ENCODE measurements at regions of chr11 and their contacts with region 1.

Region 1: DNA sequence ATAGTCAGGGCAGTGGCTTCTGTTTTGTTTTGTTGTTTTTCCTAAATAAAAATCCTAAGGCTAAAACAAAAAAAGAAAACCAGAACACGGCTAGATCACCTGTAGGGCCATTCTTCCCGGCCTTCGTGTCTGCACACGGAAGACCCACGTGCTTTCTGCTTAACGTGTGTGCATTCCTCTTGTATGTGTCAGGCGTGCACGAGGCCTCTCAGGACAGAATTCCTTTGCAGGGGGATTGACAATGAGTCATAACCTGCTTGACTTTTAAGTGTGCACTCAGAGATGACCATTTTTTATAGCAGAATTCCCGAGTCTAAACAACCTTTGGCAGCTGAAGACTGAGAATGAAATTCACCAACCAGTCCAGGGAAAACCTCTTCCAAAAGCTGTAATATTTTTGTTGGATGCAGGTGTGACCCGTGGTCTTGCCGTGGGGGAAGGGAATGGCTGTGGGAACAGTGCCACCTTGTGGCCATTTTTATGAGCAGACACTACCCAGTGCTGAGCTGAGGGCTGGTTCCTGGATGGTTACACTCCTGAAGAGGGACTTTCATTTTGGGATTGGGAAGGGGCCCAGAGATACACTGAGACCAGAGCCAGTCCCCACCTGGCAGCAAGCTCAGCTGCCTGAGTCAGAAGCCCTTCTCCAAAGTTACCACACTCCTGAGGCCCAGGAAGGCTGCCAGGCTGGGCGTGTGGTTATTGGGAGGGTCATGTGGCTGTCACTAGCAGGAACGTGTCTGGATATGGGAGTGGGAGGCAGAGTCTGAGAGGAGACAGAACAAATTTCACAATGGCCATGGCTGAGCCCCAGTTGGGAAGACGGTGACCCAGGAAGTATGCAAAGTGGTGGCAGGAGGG is 35.8 kb upstream of the DKK3 start:
- DNase-seq: peak; percentile 97
- H3K4me3 ChIP-seq: peak overlapping the region in 3 of 4 donors; percentile 8 to 19 (median 10)
- H3K27ac ChIP-seq: peak overlapping the region; percentile 77 to 82 (median 80)
- H3K4me1 ChIP-seq: peaks cover 12 to 42% (median 30%) of the 10 kb centered on the region in 4 donors
- H3K27me3 ChIP-seq: no peaks in the 10 kb centered on the region
- CTCF ChIP-seq: peak; percentile 90 to 95 (median 94)
- EP300 ChIP-seq: peak; percentile 85
- POLR2A ChIP-seq: no peak

Region 2: DNA sequence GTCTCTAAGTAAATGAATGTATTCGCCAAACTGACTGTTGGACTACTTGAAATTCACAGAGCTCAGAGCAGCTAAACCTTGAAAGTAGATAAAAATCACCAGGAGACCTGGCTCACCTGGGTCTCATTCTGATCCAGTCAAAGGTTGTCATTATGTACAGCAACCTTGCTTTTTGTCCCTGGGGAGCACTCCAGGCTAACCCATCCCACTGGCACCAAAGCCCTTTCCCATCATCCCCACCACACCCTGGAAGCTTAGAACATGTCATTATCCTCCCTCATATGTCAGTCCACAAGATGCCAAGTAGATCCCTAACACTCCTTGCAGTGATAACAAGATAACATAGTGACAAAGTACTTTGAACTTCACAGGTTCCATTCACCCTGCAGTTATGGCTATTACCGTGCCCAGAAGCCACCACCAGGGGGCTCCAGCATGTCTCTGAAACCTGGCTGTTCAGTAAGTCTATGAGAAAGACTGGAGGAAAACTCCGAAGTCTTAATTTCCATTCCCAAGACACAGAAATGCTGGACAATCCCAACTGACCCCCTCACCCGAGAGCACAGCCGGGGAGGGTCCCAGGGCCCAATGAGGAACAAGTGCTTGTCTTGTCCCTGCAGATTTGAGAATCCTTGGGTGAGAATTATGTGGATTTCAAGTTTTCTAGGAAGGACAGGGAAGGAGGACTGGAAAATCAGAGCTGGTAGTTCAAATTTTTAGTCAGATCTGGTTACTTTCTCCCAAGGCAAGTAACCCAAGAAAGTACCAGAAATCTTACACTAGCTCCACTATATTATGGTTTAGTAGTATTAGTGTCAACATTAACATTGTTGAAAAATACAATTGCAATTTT is 245.4 kb before region 1 on chr11:
- intact Hi-C with region 1: loop called (anchors 2 kb)
- DNase-seq: peak; percentile 87
- H3K4me3 ChIP-seq: no peak overlapping the region
- H3K27ac ChIP-seq: no peak overlapping the region
- H3K4me1 ChIP-seq: peaks cover 0 to 6% (median 0%) of the 10 kb centered on the region in 4 donors
- H3K27me3 ChIP-seq: no peaks in the 10 kb centered on the region
- CTCF ChIP-seq: peak; percentile 89 to 92 (median 90)
- EP300 ChIP-seq: no peak
- POLR2A ChIP-seq: no peak

Region 3: GRCh38 chr11:11931461-11932055 is 112.6 kb before region 1 on chr11:
- intact Hi-C with region 1: loop called (anchors 2 kb)
- DNase-seq: no peak
- H3K4me3 ChIP-seq: no peak overlapping the region
- H3K27ac ChIP-seq: peak overlapping the region in 1 of 4 donors; percentile 22
- H3K4me1 ChIP-seq: peaks cover 0 to 9% (median 6%) of the 10 kb centered on the region in 4 donors
- H3K27me3 ChIP-seq: no peaks in the 10 kb centered on the region
- CTCF ChIP-seq: peak; percentile 68 to 80 (median 69)
- EP300 ChIP-seq: no peak
- POLR2A ChIP-seq: no peak

Region 4: GRCh38 chr11:11977206-11977938 is 66.8 kb before region 1 on chr11:
- intact Hi-C with region 1: loop called (anchors 5 kb)
- DNase-seq: no peak
- H3K4me3 ChIP-seq: no peak overlapping the region
- H3K27ac ChIP-seq: peak overlapping the region; percentile 67 to 85 (median 80)
- H3K4me1 ChIP-seq: peaks cover 76 to 98% (median 95%) of the 10 kb centered on the region in 4 donors
- H3K27me3 ChIP-seq: no peaks in the 10 kb centered on the region
- CTCF ChIP-seq: no peak
- EP300 ChIP-seq: no peak
- POLR2A ChIP-seq: no peak

Region 5: DNA sequence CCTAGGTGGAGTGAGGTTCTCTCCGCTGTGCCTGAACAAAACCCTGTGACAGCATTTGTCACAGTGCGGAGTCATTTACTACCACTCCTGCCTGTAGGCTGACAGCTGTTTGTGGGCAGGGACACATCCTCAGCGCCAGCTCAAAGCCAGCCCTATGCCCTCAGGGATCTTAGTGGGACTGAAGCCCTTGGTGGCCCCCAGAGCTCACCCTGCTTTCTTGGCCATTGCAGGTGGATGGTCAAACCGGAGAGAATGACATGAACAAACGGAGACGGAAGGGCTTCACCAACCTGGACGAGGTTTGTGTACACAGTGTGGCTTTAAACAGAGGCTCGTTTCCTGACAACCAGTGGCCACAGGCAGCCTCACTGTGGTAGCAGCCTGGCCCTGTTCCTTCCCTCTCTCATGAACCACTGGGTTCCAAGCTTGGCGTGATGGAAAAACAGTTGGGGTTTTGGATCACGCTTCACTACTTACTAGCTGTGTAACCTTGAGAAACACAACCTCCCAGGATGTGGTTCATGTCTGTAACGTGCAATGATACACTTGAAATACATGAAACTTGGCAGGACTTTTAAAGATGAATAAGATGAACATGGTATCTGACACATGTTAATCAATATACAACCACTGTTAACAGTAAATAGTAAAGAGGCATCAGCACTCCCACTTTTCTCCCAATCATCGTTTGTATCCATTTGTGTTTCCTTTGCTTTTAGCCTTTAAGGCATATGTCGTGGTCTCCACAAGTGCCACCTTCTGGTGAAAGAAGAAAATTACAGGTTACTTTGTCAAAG is 192.0 kb after region 1 on chr11:
- intact Hi-C with region 1: loop called (anchors 2 kb)
- DNase-seq: no peak
- H3K4me3 ChIP-seq: no peak overlapping the region
- H3K27ac ChIP-seq: peak overlapping the region; percentile 82 to 89 (median 88)
- H3K4me1 ChIP-seq: peaks cover 18 to 98% (median 91%) of the 10 kb centered on the region in 4 donors
- H3K27me3 ChIP-seq: no peaks in the 10 kb centered on the region
- CTCF ChIP-seq: peak; percentile 52 to 73 (median 72)
- EP300 ChIP-seq: no peak
- POLR2A ChIP-seq: no peak

Region 6: DNA sequence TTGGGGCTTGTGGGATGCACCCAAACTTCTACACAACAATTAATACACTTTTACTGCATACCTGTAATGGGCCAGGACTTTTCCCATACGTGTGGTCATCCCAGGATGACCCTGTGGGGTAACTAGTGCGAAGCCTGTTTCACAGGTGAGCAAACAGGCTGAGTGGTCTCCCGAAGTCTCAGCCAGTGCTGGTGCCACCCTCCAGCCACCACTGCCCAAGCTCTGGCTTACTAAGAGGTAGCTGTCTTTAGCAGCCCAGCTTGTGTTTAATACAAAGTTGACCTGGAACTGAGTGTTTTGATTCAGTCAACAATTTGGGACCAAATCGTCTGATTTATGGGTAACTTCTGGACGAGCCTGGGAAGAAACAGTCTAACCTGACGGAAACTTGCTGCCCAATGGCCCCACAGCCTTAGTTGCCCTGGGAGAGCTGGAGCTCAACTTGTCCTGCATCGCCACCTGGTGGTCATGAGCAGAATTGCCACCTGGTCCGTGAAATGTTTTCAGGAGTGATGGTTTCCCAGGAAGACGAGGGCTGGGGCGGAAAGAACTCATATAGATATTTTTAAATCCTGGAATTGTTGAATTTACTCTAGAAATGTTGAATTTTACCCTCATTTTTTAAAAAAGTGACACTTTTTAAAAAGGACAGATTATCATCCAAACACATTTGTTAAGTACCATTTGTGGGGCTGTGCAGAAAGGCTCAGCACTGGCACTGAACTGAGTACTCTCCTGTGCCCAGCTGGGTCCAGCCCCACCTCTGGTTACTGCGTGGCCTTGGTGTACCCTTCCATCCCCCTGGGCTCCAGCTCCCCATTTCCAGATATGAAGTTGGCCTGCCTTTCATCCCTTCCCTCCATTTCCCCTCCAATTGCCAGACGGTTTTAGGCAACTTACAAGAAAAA is 237.6 kb after region 1 on chr11:
- intact Hi-C with region 1: loop called (anchors 1 kb)
- DNase-seq: peak; percentile 96
- H3K4me3 ChIP-seq: no peak overlapping the region
- H3K27ac ChIP-seq: peak overlapping the region in 1 of 4 donors; percentile 66
- H3K4me1 ChIP-seq: peaks cover 6 to 48% (median 38%) of the 10 kb centered on the region in 4 donors
- H3K27me3 ChIP-seq: no peaks in the 10 kb centered on the region
- CTCF ChIP-seq: peak in 2 of 3 experiments; percentile 99 to 100
- EP300 ChIP-seq: no peak
- POLR2A ChIP-seq: no peak